Head of caudate nucleus (tissue), 42 donors: ENCODE measurements at regions of chr2 and their contacts with region 1.

Region 1: DNA sequence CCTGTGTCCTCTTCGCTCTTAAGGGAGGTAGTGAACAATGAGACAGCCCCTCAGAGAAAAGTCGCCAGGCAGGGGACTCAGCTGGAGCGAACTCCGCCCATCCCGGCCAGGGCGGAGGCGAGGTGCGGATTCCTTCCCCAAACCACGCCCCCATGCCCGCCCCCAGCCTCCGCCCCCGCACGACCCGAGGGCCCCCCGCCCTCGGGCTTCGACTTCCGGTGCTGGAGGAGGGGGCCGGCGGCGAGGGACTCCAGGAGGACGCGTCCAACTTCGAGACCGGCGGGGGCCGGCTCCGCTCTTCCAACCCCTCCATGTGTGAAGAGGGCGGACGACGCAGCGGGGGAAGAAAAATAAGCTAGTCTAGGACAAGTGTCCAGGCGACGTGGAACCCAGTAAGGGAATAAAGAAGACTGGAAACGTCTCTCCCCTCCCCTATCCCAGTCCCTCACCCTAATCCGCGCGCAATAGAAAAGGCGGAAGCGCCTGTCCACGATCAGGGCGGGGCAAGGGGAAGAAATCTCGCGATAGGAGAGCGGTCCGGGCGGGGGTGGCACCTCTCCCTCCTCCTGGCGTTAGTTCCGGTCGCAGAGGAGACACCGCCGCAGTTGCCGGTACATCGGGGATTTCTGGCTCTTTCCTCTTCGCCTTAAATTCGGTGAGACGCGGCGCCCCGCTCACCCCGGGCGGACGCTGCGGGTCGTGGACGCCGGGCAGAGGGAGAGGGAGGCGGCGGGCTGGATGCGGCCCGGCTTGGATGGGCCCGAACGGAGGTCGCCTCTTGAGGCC is at the start of gene BZW1:
- DNase-seq: peak; percentile 91 to 99 (median 97)

Region 2: GRCh38 chr2:200498402-200499162 is 312.9 kb before region 1 on chr2:
- intact Hi-C with region 1: no loop called
- DNase-seq: no peak

Region 3: DNA sequence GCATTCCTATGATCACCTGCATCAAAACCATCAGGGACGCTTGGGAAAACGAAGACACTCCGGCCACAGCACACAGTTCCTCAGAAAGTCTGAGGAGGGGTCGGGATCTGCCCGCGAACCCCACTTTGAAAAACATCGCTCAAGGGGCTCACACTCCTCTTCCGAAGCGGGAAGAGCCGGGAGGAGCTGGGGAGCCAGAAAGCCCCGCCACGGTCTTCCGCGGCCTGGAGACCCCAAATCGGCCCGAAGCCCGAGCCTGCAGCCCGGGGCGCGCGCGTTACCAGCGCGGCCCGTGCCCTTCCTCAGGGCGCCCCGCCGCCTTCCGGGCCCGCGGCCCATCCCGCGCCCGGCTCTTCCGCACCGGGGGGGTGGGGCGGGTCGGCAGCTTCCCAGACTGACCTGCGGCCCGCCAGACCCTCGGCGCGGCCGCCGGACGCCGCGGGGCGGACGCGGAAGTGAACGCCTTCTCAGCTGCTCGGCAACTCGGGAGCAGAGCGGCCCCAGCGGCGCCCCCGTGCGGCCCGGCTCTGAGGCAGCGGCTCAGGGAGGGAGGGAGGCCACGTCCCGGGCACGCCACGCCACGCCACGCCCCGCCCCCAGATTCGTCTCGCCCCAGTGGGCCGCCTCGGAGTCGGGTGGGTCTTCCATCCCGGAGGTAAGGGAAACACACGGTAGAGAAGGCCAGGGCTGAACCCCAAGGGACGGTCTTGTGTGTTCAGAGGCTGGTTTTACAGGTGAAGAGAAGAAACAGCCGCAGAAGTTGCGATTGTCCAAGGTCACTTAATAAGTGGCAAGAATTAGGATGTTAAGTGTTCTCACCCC is 301.7 kb before region 1 on chr2 and contains the start of gene KCTD18:
- intact Hi-C with region 1: loop called (anchors 10 kb)
- DNase-seq: peak; percentile 76 to 98 (median 95)

Region 4: GRCh38 chr2:200713003-200713703 is 98.4 kb before region 1 on chr2:
- intact Hi-C with region 1: loop called (anchors 5 kb)
- DNase-seq: peak; percentile 68 to 96 (median 86)

Region 5: GRCh38 chr2:200864176-200864976 is 52.8 kb after region 1 on chr2 and contains the start of gene CLK1:
- intact Hi-C with region 1: loop called (anchors 5 kb)
- DNase-seq: peak; percentile 90 to 98 (median 96)

Region 6: DNA sequence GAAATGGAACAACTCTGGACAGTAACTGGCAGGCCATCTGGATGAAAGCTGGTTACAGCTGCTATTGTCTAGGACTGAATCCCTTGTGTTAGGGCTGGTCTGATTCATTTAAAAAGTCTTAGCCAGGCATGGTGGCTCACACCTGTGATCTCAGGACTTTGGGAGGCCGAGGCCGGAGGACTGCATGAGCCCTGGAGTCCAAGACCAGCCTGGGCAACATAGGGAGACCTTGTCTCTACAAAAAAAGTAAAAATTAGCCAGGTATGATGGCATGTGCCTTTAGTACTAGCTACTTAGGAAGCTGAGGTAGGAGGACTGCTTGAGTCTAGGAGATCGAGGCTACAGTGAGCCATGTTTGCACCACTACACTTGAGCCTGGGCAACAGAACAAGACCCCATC is 289.0 kb after region 1 on chr2:
- intact Hi-C with region 1: no loop called
- DNase-seq: no peak